A673 (cell line): ENCODE measurements at regions of chr15 and their contacts with region 1.

Region 1: GRCh38 chr15:77870195-77871065 is 207.1 kb downstream of the TBC1D2B start:
- DNase-seq: peak; percentile 63
- H3K4me3 ChIP-seq: no peak overlapping the region
- H3K27ac ChIP-seq: no peak overlapping the region
- H3K4me1 ChIP-seq: peaks cover 24% of the 10 kb centered on the region
- H3K27me3 ChIP-seq: no peaks in the 10 kb centered on the region
- CTCF ChIP-seq: peak; percentile 72

Region 2: DNA sequence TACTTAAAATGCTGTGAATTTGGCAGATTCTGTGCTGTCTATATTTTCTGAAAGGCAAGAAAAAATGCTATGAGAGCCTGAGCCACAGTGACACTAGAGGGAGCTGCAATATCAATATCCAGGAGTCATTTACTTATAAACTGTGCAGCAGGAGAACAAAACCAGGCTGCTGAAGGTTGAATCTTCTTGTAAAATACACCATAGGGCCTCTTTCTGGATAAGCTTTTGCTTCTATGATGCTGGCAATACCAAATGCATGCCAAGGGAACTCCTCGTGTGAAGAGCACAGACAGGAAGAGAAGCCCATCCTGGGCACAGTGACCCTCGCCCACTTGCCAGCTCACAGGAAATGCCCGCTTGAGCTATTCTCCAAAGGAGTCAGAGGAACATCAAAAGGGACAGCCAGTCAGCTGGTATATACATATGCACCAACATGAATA is 751.5 kb before region 1 on chr15:
- CTCF ChIA-PET with region 1: interaction called, 3 read pairs
- POLR2A ChIA-PET with region 1: no interaction called
- intact Hi-C with region 1: loop called (anchors 10 kb)
- DNase-seq: peak; percentile 82
- H3K4me3 ChIP-seq: no peak overlapping the region
- H3K27ac ChIP-seq: no peak overlapping the region
- H3K4me1 ChIP-seq: no peaks in the 10 kb centered on the region
- H3K27me3 ChIP-seq: no peaks in the 10 kb centered on the region
- CTCF ChIP-seq: peak; percentile 93

Region 3: DNA sequence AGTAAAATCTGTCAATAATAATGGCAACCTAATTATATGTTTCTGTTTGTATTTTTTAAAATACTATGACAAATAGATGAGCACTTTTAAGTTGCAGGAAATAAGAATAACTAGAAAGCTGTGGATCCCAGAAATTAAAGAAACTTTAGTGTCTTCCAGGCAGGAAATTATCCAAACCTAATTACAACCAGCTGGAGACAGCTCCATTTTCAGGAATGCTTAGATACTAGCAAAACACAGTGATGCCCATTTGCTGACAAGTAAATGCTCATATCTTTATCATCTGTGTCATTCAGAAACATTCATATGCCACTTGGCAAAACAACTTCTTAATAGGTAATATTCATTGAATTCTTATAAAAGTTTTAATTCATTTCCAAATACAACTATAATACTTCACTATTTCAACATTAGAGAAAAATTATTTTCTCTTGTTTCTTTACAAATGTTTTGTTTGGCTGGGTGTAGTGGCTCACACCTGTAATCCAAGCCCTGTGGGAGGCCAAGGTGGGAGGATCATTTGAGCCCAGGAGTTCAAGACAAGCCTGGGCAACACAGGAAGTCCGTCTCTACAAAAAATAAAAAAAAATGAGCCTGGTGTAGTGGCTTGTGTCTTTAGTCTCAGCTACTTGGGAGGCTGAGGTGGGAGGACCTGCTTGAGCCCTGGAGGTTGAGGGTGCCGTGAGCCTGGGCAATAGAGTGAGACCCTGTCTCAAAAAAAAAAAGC is 630.4 kb before region 1 on chr15:
- CTCF ChIA-PET with region 1: no interaction called
- POLR2A ChIA-PET with region 1: no interaction called
- intact Hi-C with region 1: no loop called
- DNase-seq: peak; percentile 21
- H3K4me3 ChIP-seq: no peak overlapping the region
- H3K27ac ChIP-seq: peak overlapping the region; percentile 7
- H3K4me1 ChIP-seq: peaks cover 18% of the 10 kb centered on the region
- H3K27me3 ChIP-seq: no peaks in the 10 kb centered on the region
- CTCF ChIP-seq: no peak

Region 4: DNA sequence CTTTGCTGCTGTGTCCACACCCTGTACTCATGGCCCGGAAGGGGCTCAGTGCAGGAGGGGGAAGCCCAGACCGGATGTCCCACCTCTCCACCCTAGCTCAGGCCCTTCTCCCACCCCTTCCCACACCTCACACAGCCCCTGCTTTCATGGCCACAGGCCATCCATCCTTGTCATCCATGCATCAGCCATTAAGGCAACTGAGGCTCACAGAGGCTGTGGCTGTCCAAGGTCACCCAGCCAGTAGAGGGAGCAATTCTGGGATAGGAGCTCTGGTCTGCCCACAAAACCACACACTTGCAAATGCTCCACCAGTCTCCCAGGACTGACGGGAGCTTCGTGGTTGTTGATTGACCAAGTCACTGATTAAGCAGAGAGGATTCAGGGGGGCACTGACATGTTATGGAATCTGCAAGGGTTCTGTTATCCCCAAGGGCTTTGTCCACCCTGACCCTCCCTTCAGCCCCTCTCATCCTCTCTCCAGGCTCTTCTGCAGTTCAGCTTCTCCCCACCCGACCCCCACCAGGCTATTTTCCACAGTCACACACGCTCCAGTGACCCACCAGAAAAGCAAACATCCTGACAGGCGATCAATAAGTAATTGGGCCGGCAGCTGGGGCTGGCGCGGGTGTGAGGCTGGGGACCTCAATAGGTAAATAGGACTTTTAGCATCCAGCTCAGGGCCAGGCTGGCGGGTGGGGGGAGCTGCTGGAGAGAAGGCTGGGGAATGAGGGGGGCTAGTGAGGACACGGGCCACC is 252.8 kb before region 1 on chr15:
- CTCF ChIA-PET with region 1: no interaction called
- POLR2A ChIA-PET with region 1: no interaction called
- intact Hi-C with region 1: no loop called
- DNase-seq: peak; percentile 58
- H3K4me3 ChIP-seq: no peak overlapping the region
- H3K27ac ChIP-seq: no peak overlapping the region
- H3K4me1 ChIP-seq: peaks cover 17% of the 10 kb centered on the region
- H3K27me3 ChIP-seq: no peaks in the 10 kb centered on the region
- CTCF ChIP-seq: peak; percentile 69

Region 5: GRCh38 chr15:77633134-77633912 is 237.1 kb before region 1 on chr15:
- CTCF ChIA-PET with region 1: no interaction called
- POLR2A ChIA-PET with region 1: no interaction called
- intact Hi-C with region 1: loop called (anchors 2 kb)
- DNase-seq: peak; percentile 87
- H3K4me3 ChIP-seq: peak overlapping the region; percentile 68
- H3K27ac ChIP-seq: peak overlapping the region; percentile 82
- H3K4me1 ChIP-seq: peaks cover 34% of the 10 kb centered on the region
- H3K27me3 ChIP-seq: no peaks in the 10 kb centered on the region
- CTCF ChIP-seq: peak; percentile 100

Region 6: GRCh38 chr15:77819841-77820728 is 50.3 kb before region 1 on chr15:
- CTCF ChIA-PET with region 1: no interaction called
- POLR2A ChIA-PET with region 1: no interaction called
- intact Hi-C with region 1: no loop called
- DNase-seq: peak; percentile 49
- H3K4me3 ChIP-seq: peak overlapping the region; percentile 93
- H3K27ac ChIP-seq: peak overlapping the region; percentile 91
- H3K4me1 ChIP-seq: peaks cover 36% of the 10 kb centered on the region
- H3K27me3 ChIP-seq: no peaks in the 10 kb centered on the region
- CTCF ChIP-seq: no peak; the same call in none of the 2 replicates

Region 7: DNA sequence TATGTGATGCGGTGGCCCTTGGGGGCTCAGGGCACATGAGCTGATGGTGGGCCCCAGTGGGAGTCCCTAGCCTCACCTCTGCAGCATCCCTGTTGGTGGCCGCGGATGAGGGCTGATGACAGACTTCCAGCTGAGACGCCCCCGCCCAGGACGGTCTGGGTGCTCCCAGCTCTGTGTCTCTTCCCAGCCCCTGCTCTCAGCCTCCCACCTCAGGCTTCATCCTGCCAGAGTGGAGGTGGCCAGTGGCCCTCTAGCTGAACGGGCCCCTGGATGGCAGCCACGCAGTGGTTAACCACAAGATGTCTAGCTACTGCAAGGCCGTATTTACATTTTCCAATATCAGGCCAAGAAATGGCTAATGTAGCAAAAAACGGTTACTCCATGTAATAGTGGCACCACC is 32.4 kb before region 1 on chr15:
- CTCF ChIA-PET with region 1: interaction called, 10 read pairs
- POLR2A ChIA-PET with region 1: interaction called, 6 read pairs
- intact Hi-C with region 1: no loop called
- DNase-seq: no peak
- H3K4me3 ChIP-seq: no peak overlapping the region
- H3K27ac ChIP-seq: no peak overlapping the region
- H3K4me1 ChIP-seq: no peaks in the 10 kb centered on the region
- H3K27me3 ChIP-seq: no peaks in the 10 kb centered on the region
- CTCF ChIP-seq: no peak

Region 8: GRCh38 chr15:78299101-78299930 is 428.9 kb after region 1 on chr15 and contains the start of gene SKIC8:
- CTCF ChIA-PET with region 1: no interaction called
- POLR2A ChIA-PET with region 1: interaction called, 11 read pairs
- intact Hi-C with region 1: no loop called
- DNase-seq: peak; percentile 97
- H3K4me3 ChIP-seq: peak within 1 kb of the TSS; percentile 62
- H3K27ac ChIP-seq: peak within 1 kb of the TSS; percentile 68
- H3K4me1 ChIP-seq: peaks cover 16% of the 10 kb centered on the region
- H3K27me3 ChIP-seq: no peaks in the 10 kb centered on the region
- CTCF ChIP-seq: no peak
- total RNA-seq, gene SKIC8: 55.5 and 57.9 TPM in 2 replicates